PC-9 (cell line): ENCODE measurements at regions of chr4 and their contacts with region 1.

Region 1: GRCh38 chr4:150950657-150951288 is 64.3 kb downstream of the LRBA start:
- DNase-seq: no peak
- H3K4me3 ChIP-seq: no peak overlapping the region
- H3K27ac ChIP-seq: no peak overlapping the region
- H3K4me1 ChIP-seq: peaks cover 9% of the 10 kb centered on the region
- H3K27me3 ChIP-seq: no peaks in the 10 kb centered on the region
- CTCF ChIP-seq: no peak

Region 2: DNA sequence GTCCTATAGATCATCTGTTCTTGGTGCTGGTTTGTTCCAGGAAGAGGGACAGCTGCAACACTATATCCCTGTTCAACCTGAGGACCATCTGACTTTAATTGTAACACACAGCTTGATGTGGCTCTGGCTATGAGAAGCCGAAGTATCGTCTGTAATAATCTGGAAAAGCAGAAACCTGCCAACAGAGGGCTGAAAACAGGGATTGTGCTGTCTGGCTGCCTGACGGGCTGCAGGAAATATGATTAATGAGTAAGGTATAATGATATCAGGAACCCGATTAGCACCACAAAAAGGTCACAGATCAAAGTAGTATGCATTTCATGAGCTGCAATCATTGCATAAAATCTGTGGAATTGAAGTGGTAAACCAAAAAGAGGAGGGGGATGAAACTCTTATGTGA is 539.3 kb before region 1 on chr4:
- CTCF ChIA-PET with region 1: no interaction called
- POLR2A ChIA-PET with region 1: interaction called, 10 read pairs
- intact Hi-C with region 1: no loop called
- DNase-seq: no peak
- H3K4me3 ChIP-seq: no peak overlapping the region
- H3K27ac ChIP-seq: no peak overlapping the region
- H3K4me1 ChIP-seq: no peaks in the 10 kb centered on the region
- H3K27me3 ChIP-seq: no peaks in the 10 kb centered on the region
- CTCF ChIP-seq: no peak